ENCODE measurements at regions of chr7 and their contacts with region 1.

Region 1: GRCh38 chr7:73851410-73852234 is 9.3 kb upstream of the METTL27 start:
- DNase-seq: peak; percentile 65 to 99
- H3K4me3 ChIP-seq: peak overlapping the region; percentile 22; the same call in 1 of the 2 replicates
- H3K27ac ChIP-seq: peak overlapping the region; percentile 99
- H3K4me1 ChIP-seq: peaks cover 57% of the 10 kb centered on the region
- H3K27me3 ChIP-seq: no peaks in the 10 kb centered on the region
- CTCF ChIP-seq: 0 out of 2 replicates have a peak, but pooled peaks have one; percentile 11

Region 2: GRCh38 chr7:73638911-73639310 is 212.7 kb before region 1 on chr7:
- CTCF ChIA-PET with region 1: no interaction called
- POLR2A ChIA-PET with region 1: interaction called, 12 read pairs
- intact Hi-C with region 1: no loop called
- DNase-seq: no peak
- H3K4me3 ChIP-seq: no peak overlapping the region
- H3K27ac ChIP-seq: no peak overlapping the region
- H3K4me1 ChIP-seq: peaks cover 12% of the 10 kb centered on the region
- H3K27me3 ChIP-seq: no peaks in the 10 kb centered on the region
- CTCF ChIP-seq: no peak

Region 3: GRCh38 chr7:73792594-73793292 is 58.9 kb before region 1 on chr7:
- CTCF ChIA-PET with region 1: no interaction called
- POLR2A ChIA-PET with region 1: no interaction called
- intact Hi-C with region 1: loop called (anchors 1 kb)
- DNase-seq: peak; percentile 70 to 93
- H3K4me3 ChIP-seq: no peak overlapping the region
- H3K27ac ChIP-seq: peak overlapping the region; percentile 80
- H3K4me1 ChIP-seq: peaks cover 29% of the 10 kb centered on the region
- H3K27me3 ChIP-seq: no peaks in the 10 kb centered on the region
- CTCF ChIP-seq: no peak

Region 4: GRCh38 chr7:73822319-73823076 is 29.1 kb before region 1 on chr7:
- CTCF ChIA-PET with region 1: interaction called, 5 read pairs
- POLR2A ChIA-PET with region 1: interaction called, 26 read pairs
- intact Hi-C with region 1: loop called (anchors 1 kb)
- DNase-seq: peak; percentile 99
- H3K4me3 ChIP-seq: no peak overlapping the region
- H3K27ac ChIP-seq: peak overlapping the region; percentile 99
- H3K4me1 ChIP-seq: peaks cover 62% of the 10 kb centered on the region
- H3K27me3 ChIP-seq: no peaks in the 10 kb centered on the region
- CTCF ChIP-seq: no peak

Region 5: GRCh38 chr7:73833312-73833919 is 18.2 kb before region 1 on chr7:
- CTCF ChIA-PET with region 1: interaction called, 11 read pairs
- POLR2A ChIA-PET with region 1: interaction called, 49 read pairs
- intact Hi-C with region 1: loop called (anchors 1 kb)
- DNase-seq: peak; percentile 80 to 85
- H3K4me3 ChIP-seq: peak overlapping the region; percentile 97; the same call in 1 of the 2 replicates
- H3K27ac ChIP-seq: peak overlapping the region; percentile 99
- H3K4me1 ChIP-seq: peaks cover 26% of the 10 kb centered on the region
- H3K27me3 ChIP-seq: no peaks in the 10 kb centered on the region
- CTCF ChIP-seq: no peak

Region 6: DNA sequence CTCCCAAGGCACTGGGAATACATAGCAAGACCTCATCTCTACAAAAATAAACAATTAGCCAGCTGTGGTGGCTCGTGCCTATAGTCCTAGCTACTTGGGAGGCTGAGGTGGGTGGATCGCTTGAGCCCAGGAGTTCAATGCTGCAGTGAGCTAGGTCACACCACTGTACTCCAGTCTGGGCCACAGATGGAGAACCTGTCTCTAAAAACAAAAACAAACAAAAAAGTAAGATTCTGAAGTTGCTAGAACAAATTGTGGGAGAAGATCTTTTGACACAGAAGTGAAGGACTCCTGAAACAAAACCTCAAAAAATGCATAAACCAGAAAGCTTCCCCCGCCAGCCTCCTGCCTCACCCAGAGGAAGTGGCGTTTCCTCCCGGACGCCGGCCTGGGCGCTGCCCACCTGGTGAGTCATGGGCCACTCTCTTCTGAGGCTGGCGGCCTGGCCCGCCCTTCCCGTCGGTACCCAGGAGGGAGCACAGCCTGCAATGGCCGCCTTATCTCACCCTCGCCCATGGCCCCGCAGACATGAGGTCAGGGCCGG is 150.9 kb after region 1 on chr7:
- CTCF ChIA-PET with region 1: no interaction called
- POLR2A ChIA-PET with region 1: no interaction called
- intact Hi-C with region 1: no loop called
- DNase-seq: peak; percentile 57 to 76
- H3K4me3 ChIP-seq: peak overlapping the region; percentile 41; the same call in 1 of the 2 replicates
- H3K27ac ChIP-seq: peak overlapping the region; percentile 56
- H3K4me1 ChIP-seq: peaks cover 22% of the 10 kb centered on the region
- H3K27me3 ChIP-seq: no peaks in the 10 kb centered on the region
- CTCF ChIP-seq: no peak

Measured in PC-9 (cell line).